ENCODE measurements at regions of chr12 and their contacts with region 1.

Region 1: GRCh38 chr12:106302401-106303201 is at the start of gene TCP11L2:
- DNase-seq: peak; percentile 93
- ATAC-seq: peak; percentile 83 to 90 (median 86)
- H3K4me3 ChIP-seq: peak within 1 kb of the TSS; percentile 56 to 96 (median 84)
- H3K27ac ChIP-seq: peak within 1 kb of the TSS; percentile 88 to 98 (median 98)
- H3K4me1 ChIP-seq: peaks cover 7 to 74% (median 68%) of the 10 kb centered on the region in 9 donors
- H3K27me3 ChIP-seq: no peaks in the 10 kb centered on the region
- CTCF ChIP-seq: no peak
- total RNA-seq, gene TCP11L2: 77.6 to 168 (median 120) TPM

Region 2: GRCh38 chr12:106247674-106248311 is 54.8 kb before region 1 on chr12 and contains the start of gene CKAP4:
- intact Hi-C with region 1: loop called in 8 of 10 experiments (anchors 2 to 10 kb)
- DNase-seq: peak; percentile 77 to 86
- ATAC-seq: peak; percentile 76 to 92 (median 84)
- H3K4me3 ChIP-seq: peak within 1 kb of the TSS; percentile 67 to 98 (median 89)
- H3K27ac ChIP-seq: peak within 1 kb of the TSS; percentile 97 to 100 (median 99)
- H3K4me1 ChIP-seq: peaks cover 14 to 61% (median 48%) of the 10 kb centered on the region in 9 donors
- H3K27me3 ChIP-seq: no peaks in the 10 kb centered on the region
- CTCF ChIP-seq: no peak
- total RNA-seq, gene CKAP4: 38.5 to 63.2 (median 47.9) TPM

Region 3: DNA sequence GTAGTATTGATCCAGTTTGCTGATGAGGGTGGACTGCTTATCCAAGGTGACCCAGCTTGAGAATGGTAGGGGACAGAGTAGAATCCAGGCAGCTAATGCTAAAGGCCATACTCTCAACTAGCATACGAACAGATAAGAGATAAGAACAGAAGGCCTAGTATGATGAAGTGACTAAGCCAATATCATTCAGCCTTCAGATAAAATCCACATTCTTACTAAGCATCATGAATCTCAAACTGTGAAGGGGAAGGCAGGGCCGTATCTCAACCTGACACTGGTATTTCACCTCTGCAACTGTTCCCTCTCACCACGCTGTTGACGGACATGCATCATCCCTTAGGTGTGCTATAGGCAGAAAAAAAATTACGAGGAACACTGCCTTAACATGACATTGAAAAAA is 46.6 kb before region 1 on chr12:
- intact Hi-C with region 1: loop called in 1 of 10 experiments (anchors 1 kb)
- DNase-seq: no peak
- ATAC-seq: no peak
- H3K4me3 ChIP-seq: no peak overlapping the region
- H3K27ac ChIP-seq: no peak overlapping the region
- H3K4me1 ChIP-seq: peaks cover 0 to 7% (median 0%) of the 10 kb centered on the region in 9 donors
- H3K27me3 ChIP-seq: no peaks in the 10 kb centered on the region
- CTCF ChIP-seq: no peak

Region 4: DNA sequence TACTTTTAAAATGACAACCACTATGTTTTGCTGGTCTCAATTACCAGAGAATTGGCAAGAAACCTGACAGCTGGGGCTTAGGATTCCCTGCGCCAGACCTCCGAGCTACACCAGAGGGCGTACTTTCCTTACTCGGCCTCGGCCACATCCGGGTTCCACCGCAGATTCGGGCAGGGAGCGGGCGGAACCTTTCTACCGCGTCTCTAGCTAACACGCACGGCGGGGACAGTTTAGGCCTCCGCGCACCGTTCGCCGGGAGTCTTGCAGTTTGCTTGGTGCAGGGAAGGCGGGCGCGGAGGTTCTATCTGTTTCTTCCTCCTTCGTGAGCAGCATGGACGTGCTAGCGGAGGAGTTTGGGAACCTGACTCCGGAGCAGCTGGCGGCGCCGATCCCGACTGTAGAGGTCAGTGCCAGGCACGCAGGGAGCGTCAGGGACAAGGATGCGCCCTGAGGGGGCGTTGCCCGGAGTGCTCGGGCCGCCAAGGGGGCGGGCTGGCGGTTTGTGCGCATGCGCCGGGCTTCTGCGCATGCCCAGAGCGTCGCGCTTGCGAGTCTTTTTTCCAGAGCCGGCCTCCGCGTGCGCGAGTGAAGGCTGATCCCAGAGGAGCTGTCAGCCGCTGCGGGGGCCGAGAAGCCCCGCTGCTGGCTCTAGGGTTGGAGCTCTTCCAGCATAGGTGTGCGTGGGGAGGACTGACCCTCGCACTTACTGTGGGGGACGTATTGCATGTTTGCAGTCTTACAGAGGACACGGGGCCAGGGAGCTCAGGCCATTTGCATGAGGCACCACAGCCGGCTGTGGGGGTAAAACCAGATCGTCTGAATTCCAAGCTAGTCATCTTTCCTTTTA is 55.2 kb after region 1 on chr12 and contains the start of gene POLR3B:
- intact Hi-C with region 1: loop called in 1 of 10 experiments (anchors 10 kb)
- DNase-seq: peak; percentile 94 to 96
- ATAC-seq: peak; percentile 94 to 99 (median 96)
- H3K4me3 ChIP-seq: peak within 1 kb of the TSS; percentile 54 to 90 (median 70)
- H3K27ac ChIP-seq: peak within 1 kb of the TSS; percentile 89 to 96 (median 94)
- H3K4me1 ChIP-seq: peaks cover 3 to 27% (median 20%) of the 10 kb centered on the region in 9 donors
- H3K27me3 ChIP-seq: no peaks in the 10 kb centered on the region
- CTCF ChIP-seq: peak; percentile 81 to 98 (median 91)
- total RNA-seq, gene POLR3B: 7.4 to 12.0 (median 9.6) TPM

Region 5: GRCh38 chr12:106389151-106389550 is 86.5 kb after region 1 on chr12:
- intact Hi-C with region 1: no loop called
- DNase-seq: no peak
- ATAC-seq: no peak
- H3K4me3 ChIP-seq: no peak overlapping the region
- H3K27ac ChIP-seq: no peak overlapping the region
- H3K4me1 ChIP-seq: no peaks in the 10 kb centered on the region
- H3K27me3 ChIP-seq: no peaks in the 10 kb centered on the region
- CTCF ChIP-seq: no peak